Dorsolateral prefrontal cortex (tissue), 120 donors: ENCODE measurements at regions of chr17 and their contacts with region 1.

Region 1: GRCh38 chr17:43367737-43368242 is 31.0 kb upstream of the ARL4D start:
- DNase-seq: peak in 1 of 10 donors; percentile 9
- H3K4me3 ChIP-seq: peak overlapping the region in 58 of 59 donors; percentile 45 to 79 (median 67)
- H3K27ac ChIP-seq: peak overlapping the region; percentile 95 to 100 (median 99)
- H3K27me3 ChIP-seq: no peaks in the 10 kb centered on the region
- CTCF ChIP-seq: peak in 8 of 56 donors; percentile 3 to 19 (median 10)

Region 2: GRCh38 chr17:43175816-43176570 is 191.8 kb before region 1 on chr17:
- intact Hi-C with region 1: no loop called
- DNase-seq: no peak
- H3K4me3 ChIP-seq: peak overlapping the region in 10 of 59 donors; percentile 2 to 37 (median 12)
- H3K27ac ChIP-seq: peak overlapping the region in 14 of 59 donors; percentile 1 to 59 (median 20)
- H3K27me3 ChIP-seq: no peaks in the 10 kb centered on the region
- CTCF ChIP-seq: no peak

Region 3: DNA sequence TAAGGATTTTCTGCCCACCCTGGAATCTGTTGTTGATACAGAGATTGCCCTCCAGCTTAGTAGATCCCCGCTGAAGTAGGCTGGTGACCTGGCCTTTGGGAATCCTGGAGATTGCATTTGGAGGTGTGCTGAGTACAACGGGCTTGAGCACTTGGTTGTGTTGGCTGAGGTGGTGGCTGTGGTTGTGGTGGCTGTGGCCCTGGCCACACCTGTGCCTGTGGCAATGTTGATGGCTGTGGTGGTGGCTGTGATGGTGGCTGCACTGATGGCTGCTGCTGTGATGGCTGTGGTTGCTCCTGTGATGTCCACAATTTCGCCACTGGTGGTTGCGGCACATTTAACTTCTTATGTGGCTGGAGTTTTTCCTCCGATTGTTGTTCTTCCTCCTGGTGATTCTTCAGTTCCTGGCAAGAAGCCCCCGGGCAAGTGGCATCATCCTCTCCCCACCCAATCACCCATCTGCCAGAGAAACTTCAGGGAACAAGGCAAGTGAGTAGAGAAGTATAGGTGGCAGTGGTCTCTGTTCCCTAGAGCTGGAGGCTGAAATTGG is 143.6 kb before region 1 on chr17:
- intact Hi-C with region 1: no loop called
- DNase-seq: no peak
- H3K4me3 ChIP-seq: no peak overlapping the region
- H3K27ac ChIP-seq: no peak overlapping the region
- H3K27me3 ChIP-seq: no peaks in the 10 kb centered on the region
- CTCF ChIP-seq: no peak

Region 4: DNA sequence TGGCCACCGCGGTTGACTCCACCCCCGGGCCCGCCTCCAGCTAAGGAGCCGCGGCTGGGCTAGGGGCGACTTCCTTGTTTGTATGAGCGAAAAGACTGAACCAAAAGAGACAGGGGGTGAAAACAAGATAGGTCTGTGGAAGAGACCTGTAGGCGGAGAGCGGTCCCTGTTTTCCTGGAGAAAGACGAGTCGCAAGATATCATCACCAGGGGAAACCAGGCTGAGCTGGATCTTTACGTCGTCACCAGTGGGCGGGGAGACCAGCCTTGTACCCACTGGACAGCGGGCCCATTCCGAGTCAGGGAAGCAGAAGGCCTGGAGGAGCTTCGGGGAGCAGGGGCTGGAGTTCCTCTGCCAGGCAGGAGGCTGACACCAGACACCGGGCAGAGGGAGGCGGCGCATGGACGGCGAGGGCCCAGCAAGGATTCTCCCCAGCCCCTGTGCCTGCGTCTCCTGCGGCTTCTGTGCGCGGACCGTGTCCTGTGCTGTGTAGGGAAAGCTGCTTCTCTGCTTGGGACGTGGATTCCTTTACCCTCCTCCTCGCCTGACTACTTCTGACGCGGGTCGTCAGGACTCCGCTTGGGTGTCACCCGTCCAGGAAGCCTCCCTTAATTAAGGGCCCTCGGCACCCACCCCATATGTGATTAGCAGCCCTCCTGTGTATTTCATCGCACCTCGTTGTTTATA is 20.7 kb after region 1 on chr17:
- intact Hi-C with region 1: loop called (anchors 1 kb)
- DNase-seq: peak; percentile 80 to 96 (median 93)
- H3K4me3 ChIP-seq: peak overlapping the region; percentile 50 to 98 (median 78)
- H3K27ac ChIP-seq: peak overlapping the region; percentile 87 to 100 (median 98)
- H3K27me3 ChIP-seq: no peaks in the 10 kb centered on the region
- CTCF ChIP-seq: peak in 24 of 56 donors; percentile 4 to 48 (median 20)